ENCODE measurements at regions of chr9 and their contacts with region 1.

Region 1: DNA sequence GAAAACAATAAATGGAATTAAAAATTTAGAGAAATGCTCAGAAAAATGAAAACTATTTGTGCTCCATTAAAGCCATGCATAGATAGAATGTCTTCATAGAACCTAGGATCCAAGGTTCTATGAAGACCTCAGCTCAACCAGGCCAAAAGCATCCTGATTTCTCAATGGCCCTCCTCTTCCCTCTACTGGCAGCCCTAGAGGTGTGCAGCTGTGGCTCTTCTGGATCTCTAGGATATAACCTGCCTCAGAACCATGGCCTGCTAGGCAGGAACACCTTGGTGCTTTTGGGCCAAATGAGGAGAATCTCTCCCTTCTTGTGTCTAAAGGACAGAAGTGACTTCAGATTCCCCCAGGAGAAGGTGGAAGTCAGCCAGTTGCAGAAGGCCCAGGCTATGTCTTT is 15.1 kb downstream of the IFNA1 start:
- DNase-seq: peak; percentile 70
- H3K4me3 Mint-ChIP-seq: no peak overlapping the region
- H3K27ac Mint-ChIP-seq: no peak overlapping the region
- H3K4me1 Mint-ChIP-seq: no peaks in the 10 kb centered on the region
- H3K27me3 Mint-ChIP-seq: peaks cover 35% of the 10 kb centered on the region

Region 2: DNA sequence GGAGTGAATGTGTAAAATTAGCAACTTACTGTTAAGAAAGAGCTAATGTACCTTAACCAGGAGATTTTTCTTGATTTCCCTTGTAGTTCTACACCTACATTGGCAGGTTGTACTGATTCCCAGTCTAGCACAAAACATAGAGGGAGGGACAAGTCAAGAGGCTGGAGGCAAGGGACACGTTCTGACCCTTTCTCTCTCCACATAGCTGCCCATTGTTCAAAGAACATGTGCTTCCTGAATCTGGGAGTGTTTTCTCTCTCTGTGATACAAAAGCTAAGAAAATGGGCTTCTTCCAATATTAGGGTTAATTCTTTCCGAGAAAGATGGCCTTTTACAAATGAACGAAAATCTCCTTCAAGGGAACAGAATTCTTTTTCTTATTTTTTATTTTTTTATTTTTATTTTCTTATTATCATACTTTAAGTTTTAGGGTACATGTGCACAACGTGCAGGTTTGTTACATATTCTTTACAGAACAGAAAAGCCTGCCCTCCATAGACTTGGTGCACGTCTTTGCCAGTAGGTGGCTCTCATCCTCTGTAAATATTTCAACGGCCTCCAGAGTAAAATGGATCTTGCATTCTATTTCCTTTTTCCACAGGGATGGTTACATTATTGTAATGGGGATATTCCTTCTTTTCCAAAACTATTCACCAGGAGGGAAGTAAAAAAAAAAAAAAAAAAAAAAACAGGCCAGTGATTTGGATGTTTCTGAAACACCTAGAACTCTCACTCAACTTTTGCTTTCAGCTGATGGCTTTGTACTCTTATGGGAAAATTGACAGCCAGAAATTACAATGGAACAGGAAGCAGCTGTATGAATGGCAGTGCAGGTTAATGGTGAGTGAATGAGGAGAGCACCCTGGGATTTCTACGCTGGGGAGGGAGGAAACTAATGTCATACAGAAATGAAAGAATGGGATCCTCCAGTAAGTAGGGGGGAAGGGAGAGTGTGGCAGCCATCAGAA is 137.1 kb before region 1 on chr9:
- intact Hi-C with region 1: loop called (anchors 1 kb)
- DNase-seq: peak; percentile 77
- H3K4me3 Mint-ChIP-seq: no peak overlapping the region
- H3K27ac Mint-ChIP-seq: no peak overlapping the region
- H3K4me1 Mint-ChIP-seq: no peaks in the 10 kb centered on the region
- H3K27me3 Mint-ChIP-seq: peaks cover 18% of the 10 kb centered on the region

Region 3: GRCh38 chr9:21902136-21902535 is 446.8 kb after region 1 on chr9:
- intact Hi-C with region 1: no loop called
- DNase-seq: no peak
- H3K4me3 Mint-ChIP-seq: no peak overlapping the region
- H3K27ac Mint-ChIP-seq: no peak overlapping the region
- H3K4me1 Mint-ChIP-seq: peaks cover 2% of the 10 kb centered on the region
- H3K27me3 Mint-ChIP-seq: no peaks in the 10 kb centered on the region